SK-N-SH (cell line): ENCODE measurements at regions of chr9 and their contacts with region 1.

Region 1: GRCh38 chr9:35732122-35732799 is at the starts of genes CREB3 and TLN1:
- DNase-seq: peak; percentile 97
- H3K4me3 ChIP-seq: peak within 1 kb of the TSS; percentile 89 to 96
- H3K27ac ChIP-seq: peak within 1 kb of the TSS; percentile 88 to 94
- H3K4me1 ChIP-seq: peaks cover 34 to 49% of the 10 kb centered on the region in 2 experiments
- H3K27me3 ChIP-seq: no peaks in the 10 kb centered on the region
- CTCF ChIP-seq: peak; percentile 22; the same call in 1 of the 2 replicates
- EP300 ChIP-seq: peak in 1 of 2 experiments; percentile 62; a peak in 1 of 4 replicates
- RAD21 ChIP-seq: no peak
- polyA plus RNA-seq, gene CREB3: 33.9 and 38.6 TPM in 2 replicates
- polyA plus RNA-seq, gene TLN1: 91.8 and 115 TPM in 2 replicates

Region 2: GRCh38 chr9:35646533-35647265 is 85.6 kb before region 1 on chr9:
- CTCF ChIA-PET with region 1: interaction called, 24 read pairs
- POLR2A ChIA-PET with region 1: no interaction called
- DNase-seq: peak; percentile 97
- H3K4me3 ChIP-seq: peak overlapping the region; percentile 61 to 67
- H3K27ac ChIP-seq: peak overlapping the region in 1 of 2 experiments; percentile 76; a peak in 1 of 4 replicates
- H3K4me1 ChIP-seq: peaks cover 6 to 7% of the 10 kb centered on the region in 2 experiments; a peak in 2 of 4 replicates
- H3K27me3 ChIP-seq: no peaks in the 10 kb centered on the region
- CTCF ChIP-seq: peak; percentile 74
- EP300 ChIP-seq: no peak
- RAD21 ChIP-seq: peak; percentile 76

Region 3: GRCh38 chr9:35664531-35665470 is 67.5 kb before region 1 on chr9 and contains the start of gene ARHGEF39:
- CTCF ChIA-PET with region 1: interaction called, 12 read pairs
- POLR2A ChIA-PET with region 1: interaction called, 9 read pairs
- DNase-seq: peak; percentile 98
- H3K4me3 ChIP-seq: peak within 1 kb of the TSS; percentile 61 to 65
- H3K27ac ChIP-seq: peak within 1 kb of the TSS; percentile 53 to 80
- H3K4me1 ChIP-seq: peaks cover 0 to 12% of the 10 kb centered on the region in 2 experiments; a peak in 1 of 4 replicates
- H3K27me3 ChIP-seq: no peaks in the 10 kb centered on the region
- CTCF ChIP-seq: peak; percentile 55
- EP300 ChIP-seq: peak in 1 of 2 experiments; percentile 53; a peak in 2 of 4 replicates
- RAD21 ChIP-seq: no peak; the same call in 1 of the 2 replicates
- polyA plus RNA-seq, gene ARHGEF39: 4.9 and 5.2 TPM in 2 replicates

Region 4: DNA sequence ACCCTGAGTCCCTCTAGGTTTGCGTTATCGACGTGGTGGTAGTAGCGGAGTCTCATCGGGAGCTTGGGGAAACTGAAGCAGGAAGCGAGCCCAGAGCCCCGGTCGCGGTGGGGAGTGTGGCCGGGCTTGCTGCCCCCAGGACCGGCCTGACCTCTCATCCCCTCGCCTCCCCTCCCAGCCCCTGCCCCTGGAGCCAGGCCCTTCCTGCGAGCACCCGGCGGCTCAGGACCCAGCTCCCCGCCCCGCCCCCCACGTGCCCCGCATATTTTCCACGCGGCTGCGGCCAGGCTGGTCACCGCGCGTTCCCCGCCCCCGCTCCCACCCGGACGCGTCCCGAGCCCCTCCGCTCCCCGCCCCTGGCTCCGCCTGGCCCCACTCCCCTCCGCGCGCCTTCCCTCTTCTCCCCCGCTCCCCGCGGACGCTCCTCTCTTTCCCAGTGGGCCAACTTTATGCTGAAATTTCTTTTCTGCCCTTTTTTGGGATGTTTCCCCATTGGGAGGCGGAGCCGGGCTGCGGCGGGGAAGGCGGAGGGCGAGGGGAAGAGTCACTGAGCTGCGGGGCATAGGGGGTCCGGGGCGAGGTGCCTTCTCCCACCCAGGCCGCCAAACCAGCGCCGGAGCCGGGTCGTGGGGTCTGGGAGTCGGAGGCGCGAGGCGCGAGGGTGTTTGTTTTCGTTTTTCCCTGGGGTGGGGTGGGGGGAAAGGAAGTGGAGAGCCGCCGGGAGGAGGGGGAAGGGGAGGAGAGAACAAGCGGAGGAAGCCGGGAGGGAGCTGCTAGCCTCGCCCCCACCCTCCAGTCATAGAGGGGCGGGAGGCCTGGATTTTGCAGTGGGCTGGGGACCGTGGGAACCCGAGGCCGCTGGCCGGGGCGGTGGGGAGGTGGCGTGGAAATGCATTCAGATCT is 41.6 kb before region 1 on chr9:
- CTCF ChIA-PET with region 1: interaction called, 103 read pairs
- POLR2A ChIA-PET with region 1: interaction called, 10 read pairs
- DNase-seq: peak; percentile 90
- H3K4me3 ChIP-seq: peak overlapping the region; percentile 62 to 73
- H3K27ac ChIP-seq: peak overlapping the region; percentile 93 to 96
- H3K4me1 ChIP-seq: peaks cover 19 to 34% of the 10 kb centered on the region in 2 experiments; a peak in 3 of 4 replicates
- H3K27me3 ChIP-seq: no peaks in the 10 kb centered on the region
- CTCF ChIP-seq: no peak
- EP300 ChIP-seq: no peak; a peak in 1 of 4 replicates
- RAD21 ChIP-seq: no peak

Region 5: DNA sequence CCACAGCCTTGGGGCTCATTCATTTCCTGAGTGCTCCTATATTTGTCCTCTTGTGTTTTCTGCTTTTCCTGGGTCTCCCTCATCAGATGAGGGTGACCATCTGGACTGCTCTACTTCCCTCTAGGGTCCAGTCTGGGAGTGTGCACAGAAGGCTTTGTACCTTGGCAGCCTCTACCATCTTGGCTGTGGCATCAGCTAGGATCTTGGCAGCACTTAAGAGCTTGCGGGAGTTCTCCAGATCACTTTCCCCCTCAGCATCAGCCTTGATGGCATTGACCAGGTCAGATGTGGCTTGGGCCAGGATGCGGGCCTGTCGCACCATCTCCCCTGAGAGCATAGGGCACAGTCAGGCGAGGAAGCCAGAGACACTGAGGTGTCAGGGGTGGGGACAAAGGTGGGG is 16.0 kb before region 1 on chr9:
- CTCF ChIA-PET with region 1: interaction called, 68 read pairs
- POLR2A ChIA-PET with region 1: interaction called, 3 read pairs
- DNase-seq: no peak
- H3K4me3 ChIP-seq: no peak overlapping the region
- H3K27ac ChIP-seq: no peak overlapping the region
- H3K4me1 ChIP-seq: no peaks in the 10 kb centered on the region
- H3K27me3 ChIP-seq: no peaks in the 10 kb centered on the region
- CTCF ChIP-seq: no peak
- EP300 ChIP-seq: no peak
- RAD21 ChIP-seq: no peak

Region 6: DNA sequence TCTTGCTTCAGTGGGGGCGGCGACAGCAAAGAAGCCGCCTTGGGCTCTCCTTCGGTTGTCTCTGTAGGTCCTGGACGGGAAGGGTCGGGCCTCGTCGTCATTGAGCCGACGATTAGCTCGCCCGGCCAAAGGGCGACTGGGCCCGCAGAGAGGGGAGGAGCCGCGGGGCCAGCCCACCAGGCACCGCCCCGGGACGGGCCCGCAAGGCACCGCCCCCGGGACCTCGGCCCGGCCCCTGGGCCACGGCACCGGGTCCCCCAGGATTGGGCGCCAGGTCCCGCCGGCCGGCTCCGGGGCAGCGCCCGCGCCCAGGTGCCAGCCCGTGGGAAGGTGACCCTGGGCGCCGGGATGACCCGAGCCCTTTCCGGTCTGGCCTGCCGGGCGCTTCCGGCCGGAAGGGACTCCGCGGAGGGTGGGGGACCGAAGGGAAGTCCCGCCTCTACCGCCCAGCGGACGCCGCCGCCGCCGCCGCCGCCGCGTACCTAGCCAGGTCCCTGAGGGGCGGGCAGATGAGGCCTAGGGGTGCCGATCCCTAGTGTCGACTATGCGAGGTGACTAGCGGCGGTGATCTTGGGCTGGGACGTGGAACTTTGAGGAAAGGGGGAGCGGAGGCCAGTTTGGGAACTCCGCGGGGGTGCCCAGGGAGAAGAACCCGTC is 16.7 kb after region 1 on chr9 and contains the starts of genes GBA2 and RGP1:
- CTCF ChIA-PET with region 1: interaction called, 88 read pairs
- POLR2A ChIA-PET with region 1: interaction called, 28 read pairs
- DNase-seq: peak; percentile 94
- H3K4me3 ChIP-seq: peak within 1 kb of the TSS; percentile 97 to 98
- H3K27ac ChIP-seq: peak within 1 kb of the TSS; percentile 70 to 79; a peak in 3 of 4 replicates
- H3K4me1 ChIP-seq: peaks cover 12 to 33% of the 10 kb centered on the region in 2 experiments; a peak in 2 of 4 replicates
- H3K27me3 ChIP-seq: no peaks in the 10 kb centered on the region
- CTCF ChIP-seq: no peak
- EP300 ChIP-seq: peak in 1 of 2 experiments; percentile 54; a peak in 1 of 4 replicates
- RAD21 ChIP-seq: no peak
- polyA plus RNA-seq, gene GBA2: 71.5 and 98.2 TPM in 2 replicates
- polyA plus RNA-seq, gene RGP1: 16.1 and 18.6 TPM in 2 replicates

Region 7: DNA sequence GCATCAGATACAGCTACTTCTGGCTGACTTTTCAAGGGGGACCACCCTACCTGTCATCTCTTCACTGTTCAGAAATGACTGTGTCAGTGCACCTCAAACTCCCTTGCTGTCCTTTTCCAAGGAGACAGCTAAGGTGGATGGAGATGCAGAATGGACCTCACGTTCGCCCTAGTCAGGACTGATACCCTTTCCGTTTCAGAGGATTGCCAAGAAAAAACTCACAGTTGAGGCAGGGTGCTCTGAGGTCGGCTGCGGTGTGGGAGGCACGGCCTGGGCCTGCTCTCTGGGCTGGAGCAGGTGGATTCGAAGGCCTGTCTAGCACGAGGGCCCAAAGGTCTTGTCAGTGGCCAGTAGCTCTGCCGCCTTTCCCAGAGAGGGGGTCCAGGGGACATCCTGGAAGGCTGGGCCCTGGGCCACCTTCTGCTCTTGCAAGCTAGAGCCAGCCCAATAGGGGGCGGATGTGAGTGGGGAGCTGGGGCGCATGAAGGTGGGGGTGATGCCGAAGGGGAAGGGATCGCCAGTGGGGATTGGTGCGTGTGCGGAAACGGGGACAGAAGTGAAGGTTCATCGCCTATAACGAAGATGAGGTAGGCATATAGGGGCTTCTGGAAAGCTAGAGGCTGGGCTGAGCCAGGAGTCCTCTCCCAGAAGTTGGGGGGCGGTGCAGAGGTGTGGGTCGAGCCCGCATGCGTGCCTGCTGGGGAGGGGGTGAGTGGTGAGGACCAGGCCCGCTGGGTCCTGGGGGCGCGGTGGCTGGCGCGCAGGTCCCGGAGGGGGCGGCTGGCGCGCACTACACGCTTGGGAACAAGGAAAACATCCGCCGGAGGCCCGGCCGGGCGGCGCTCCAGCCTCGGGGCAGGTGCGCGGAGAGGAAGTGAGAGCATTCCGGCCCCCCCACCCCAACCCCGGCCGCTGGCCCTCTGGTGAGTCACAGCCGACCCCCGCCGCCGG is 24.3 kb after region 1 on chr9:
- CTCF ChIA-PET with region 1: interaction called, 27 read pairs
- POLR2A ChIA-PET with region 1: interaction called, 13 read pairs
- DNase-seq: peak; percentile 88
- H3K4me3 ChIP-seq: peak overlapping the region; percentile 52 to 65
- H3K27ac ChIP-seq: peak overlapping the region in 1 of 2 experiments; percentile 75; a peak in 3 of 4 replicates
- H3K4me1 ChIP-seq: peaks cover 9 to 17% of the 10 kb centered on the region in 2 experiments; a peak in 3 of 4 replicates
- H3K27me3 ChIP-seq: no peaks in the 10 kb centered on the region
- CTCF ChIP-seq: peak; percentile 61
- EP300 ChIP-seq: no peak
- RAD21 ChIP-seq: peak; percentile 47

Region 8: DNA sequence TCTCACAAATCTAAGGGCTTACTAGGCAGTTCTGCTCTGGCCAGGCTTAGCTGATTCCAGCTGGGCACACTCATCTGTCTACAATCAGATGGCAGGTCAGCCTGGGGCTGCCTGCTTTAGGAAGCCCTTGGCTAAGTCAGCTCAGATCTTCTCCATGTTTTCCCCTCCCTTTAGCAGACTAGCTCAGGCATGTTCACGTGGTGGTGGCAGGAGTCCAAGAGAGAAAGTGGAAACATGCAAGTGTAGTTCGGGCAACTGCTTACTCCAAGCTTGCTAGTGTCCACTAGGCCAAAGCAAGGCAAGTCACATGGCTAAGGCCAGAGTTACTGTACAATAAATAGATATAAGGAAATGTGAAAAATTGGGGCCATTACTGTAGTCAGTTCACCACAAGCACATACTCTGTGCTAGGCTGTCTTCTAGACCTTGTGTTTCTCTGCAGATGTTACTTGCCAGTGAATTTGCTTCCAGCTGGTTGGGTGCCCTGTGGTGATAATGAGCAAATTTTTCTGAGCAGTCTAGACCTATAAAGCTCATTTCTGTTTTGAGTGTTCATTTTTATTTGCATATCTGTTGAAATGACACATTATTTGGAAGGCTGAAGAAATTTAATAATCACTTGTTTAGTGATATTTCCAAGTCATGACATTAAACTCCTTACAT is 342.7 kb after region 1 on chr9:
- CTCF ChIA-PET with region 1: no interaction called
- POLR2A ChIA-PET with region 1: no interaction called
- DNase-seq: peak; percentile 30
- H3K4me3 ChIP-seq: no peak overlapping the region
- H3K27ac ChIP-seq: peak overlapping the region; percentile 53 to 85; a peak in 3 of 4 replicates
- H3K4me1 ChIP-seq: peaks cover 12 to 21% of the 10 kb centered on the region in 2 experiments
- H3K27me3 ChIP-seq: no peaks in the 10 kb centered on the region
- CTCF ChIP-seq: no peak
- EP300 ChIP-seq: no peak
- RAD21 ChIP-seq: no peak